ENCODE measurements at regions of chr13 and their contacts with region 1.

Region 1: DNA sequence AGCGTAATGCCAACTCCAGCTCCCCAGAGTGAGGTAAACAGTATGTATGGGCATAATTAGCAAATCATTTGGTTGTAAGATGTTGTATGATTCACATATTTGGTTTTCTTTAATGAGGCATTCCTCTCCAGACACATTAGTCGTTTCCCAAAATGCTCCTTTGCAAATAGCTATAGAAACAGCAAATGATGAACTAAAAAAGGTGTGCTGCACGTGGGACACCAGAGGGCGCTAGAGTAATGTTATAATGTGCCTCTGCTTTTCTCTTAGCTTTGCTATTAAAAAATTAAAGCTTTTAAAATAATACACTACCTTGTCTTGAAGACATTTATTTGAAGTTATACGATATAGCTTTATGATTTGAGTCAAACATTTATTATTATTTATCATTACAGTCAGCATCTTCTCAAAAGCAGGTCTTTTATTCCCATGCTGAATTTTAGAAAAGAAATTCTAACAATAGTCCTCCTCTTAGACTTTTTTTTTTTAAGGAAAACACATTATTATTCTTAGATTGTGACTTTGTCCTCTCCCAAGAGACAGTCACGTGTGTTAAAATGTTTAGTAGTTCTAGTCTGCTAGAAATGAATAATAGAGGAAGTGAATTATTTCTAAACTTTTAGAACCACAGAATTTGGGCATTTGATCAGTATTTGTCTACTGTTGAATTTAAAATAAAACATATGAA is 121.6 kb upstream of the FRY start:
- DNase-seq: peak; percentile 66
- H3K4me3 ChIP-seq: no peak overlapping the region
- H3K27ac ChIP-seq: no peak overlapping the region
- H3K4me1 ChIP-seq: no peaks in the 10 kb centered on the region
- CTCF ChIP-seq: peak; percentile 96

Region 2: GRCh38 chr13:32019612-32020233 is 109.7 kb after region 1 on chr13:
- CTCF ChIA-PET with region 1: no interaction called
- POLR2A ChIA-PET with region 1: no interaction called
- intact Hi-C with region 1: no loop called
- DNase-seq: peak; percentile 58
- H3K4me3 ChIP-seq: no peak overlapping the region
- H3K27ac ChIP-seq: no peak overlapping the region
- H3K4me1 ChIP-seq: no peaks in the 10 kb centered on the region
- CTCF ChIP-seq: peak; percentile 88

Region 3: GRCh38 chr13:32310134-32310706 is 400.2 kb after region 1 on chr13:
- CTCF ChIA-PET with region 1: no interaction called
- POLR2A ChIA-PET with region 1: interaction called, 4 read pairs
- intact Hi-C with region 1: loop called (anchors 5 kb)
- DNase-seq: peak; percentile 67
- H3K4me3 ChIP-seq: no peak overlapping the region
- H3K27ac ChIP-seq: no peak overlapping the region
- H3K4me1 ChIP-seq: peaks cover 24% of the 10 kb centered on the region
- CTCF ChIP-seq: peak; percentile 88

Region 4: GRCh38 chr13:32581177-32581786 is 671.3 kb after region 1 on chr13:
- CTCF ChIA-PET with region 1: no interaction called
- POLR2A ChIA-PET with region 1: no interaction called
- intact Hi-C with region 1: loop called (anchors 5 kb)
- DNase-seq: peak; percentile 52
- H3K4me3 ChIP-seq: no peak overlapping the region
- H3K27ac ChIP-seq: no peak overlapping the region
- H3K4me1 ChIP-seq: peaks cover 8% of the 10 kb centered on the region
- CTCF ChIP-seq: peak; percentile 91